K562 (cell line): ENCODE measurements at regions of chr2 and their contacts with region 1.

Region 1: GRCh38 chr2:107760620-107761364 is 65.9 kb upstream of the RGPD4 start:
- DNase-seq: no peak
- ATAC-seq: no peak
- H3K4me3 ChIP-seq: no peak overlapping the region
- H3K27ac ChIP-seq: no peak overlapping the region
- H3K4me1 ChIP-seq: no peaks in the 10 kb centered on the region
- H3K27me3 ChIP-seq: no peaks in the 10 kb centered on the region
- CTCF ChIP-seq: no peak
- EP300 ChIP-seq: no peak
- POLR2A ChIP-seq: no peak
- RAD21 ChIP-seq: no peak

Region 2: DNA sequence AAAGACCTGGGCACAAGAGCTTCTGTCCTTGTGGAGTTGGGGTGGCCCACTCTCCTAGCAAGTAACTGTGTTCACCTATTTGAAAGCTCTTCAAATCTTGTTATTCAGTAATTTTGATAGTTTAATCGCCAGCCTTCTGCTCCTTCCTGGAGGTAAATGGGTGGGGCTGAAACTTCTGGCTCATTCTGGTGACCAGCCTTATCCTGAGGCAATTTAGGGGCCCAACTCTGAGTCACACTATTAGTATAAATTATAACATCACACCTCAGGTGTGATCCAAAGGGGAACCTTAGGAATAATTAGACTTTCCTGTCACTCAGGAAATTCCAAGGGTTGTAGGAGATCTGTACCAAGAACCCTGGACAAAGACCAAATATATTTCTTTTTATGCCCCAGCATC is 189.9 kb before region 1 on chr2:
- CTCF ChIA-PET with region 1: no interaction called
- POLR2A ChIA-PET with region 1: no interaction called
- in situ Hi-C with region 1: no loop called
- intact Hi-C with region 1: loop called (anchors 10 kb)
- DNase-seq: no peak
- ATAC-seq: no peak
- H3K4me3 ChIP-seq: no peak overlapping the region
- H3K27ac ChIP-seq: no peak overlapping the region
- H3K4me1 ChIP-seq: no peaks in the 10 kb centered on the region; a peak in 1 of 5 replicates
- H3K27me3 ChIP-seq: no peaks in the 10 kb centered on the region
- CTCF ChIP-seq: no peak
- EP300 ChIP-seq: no peak
- POLR2A ChIP-seq: no peak
- RAD21 ChIP-seq: no peak

Region 3: GRCh38 chr2:107712857-107713256 is 47.9 kb before region 1 on chr2:
- CTCF ChIA-PET with region 1: no interaction called
- POLR2A ChIA-PET with region 1: no interaction called
- in situ Hi-C with region 1: no loop called
- intact Hi-C with region 1: no loop called
- DNase-seq: no peak
- ATAC-seq: no peak; the same call in 2 of the 3 replicates
- H3K4me3 ChIP-seq: no peak overlapping the region
- H3K27ac ChIP-seq: no peak overlapping the region; the same call in 2 of the 3 replicates
- H3K4me1 ChIP-seq: peaks cover 0 to 6% of the 10 kb centered on the region in 2 experiments; a peak in 2 of 5 replicates
- H3K27me3 ChIP-seq: no peaks in the 10 kb centered on the region
- CTCF ChIP-seq: no peak
- EP300 ChIP-seq: no peak
- POLR2A ChIP-seq: no peak
- RAD21 ChIP-seq: no peak